Cardiac septum (tissue), 1 donor: ENCODE measurements at regions of chr6 and their contacts with region 1.

Region 1: DNA sequence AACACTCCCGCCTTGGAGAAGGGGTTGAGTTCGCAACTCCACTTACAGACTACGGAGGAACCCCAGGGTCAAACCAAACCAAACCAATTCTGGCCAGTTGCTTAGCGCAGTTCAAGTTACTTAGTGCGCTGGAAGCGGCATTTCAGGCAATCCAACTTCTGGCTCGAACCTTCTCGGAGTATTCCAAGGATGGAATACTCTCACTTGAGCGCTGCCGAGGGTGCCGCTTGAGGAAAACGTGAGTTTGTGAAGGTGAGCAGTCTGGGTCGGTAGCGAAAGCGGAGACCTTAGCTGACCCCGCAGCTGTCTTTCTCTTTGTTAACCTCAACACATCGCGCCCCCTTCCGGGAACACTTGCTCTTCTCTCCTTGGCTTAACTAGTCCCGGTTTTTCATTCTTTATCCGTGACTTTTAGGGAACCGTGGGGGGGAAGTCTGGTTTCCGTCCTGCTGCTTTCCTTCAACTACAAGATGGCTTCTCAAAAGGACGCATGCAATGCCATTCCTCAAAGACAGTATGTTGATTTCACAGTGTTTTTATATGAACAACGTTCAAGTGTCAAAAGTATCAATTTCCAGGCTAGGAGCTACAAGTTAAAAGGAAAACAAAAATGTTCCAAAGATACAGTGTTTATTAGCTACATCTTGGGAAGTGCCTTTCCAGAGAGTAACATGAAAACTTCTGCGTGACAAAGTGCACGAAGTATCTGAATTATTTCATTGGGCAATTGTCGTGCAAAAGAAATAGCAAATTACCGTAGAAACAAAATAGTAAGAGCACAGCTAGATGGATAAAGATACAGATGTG is 742 bp upstream of the PNISR start:
- DNase-seq: peak; percentile 84

Region 2: DNA sequence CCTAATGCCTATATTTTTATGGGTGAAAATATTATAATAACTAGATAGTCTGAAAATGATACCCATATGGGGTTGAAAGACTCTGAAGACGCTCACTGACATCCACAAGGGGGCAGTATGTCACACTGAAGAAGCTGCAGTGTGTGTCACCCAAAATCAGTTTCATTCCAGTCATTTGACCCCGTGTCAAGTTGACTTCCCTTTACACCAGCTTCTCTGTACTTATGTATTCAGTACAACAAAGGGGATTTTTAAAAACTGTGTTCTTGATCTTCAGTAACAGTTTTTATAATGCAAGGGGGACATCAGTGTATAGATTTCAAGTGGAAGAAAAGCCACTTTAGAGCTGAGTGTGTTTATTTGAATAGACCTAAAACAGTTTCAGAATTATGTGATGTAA is 95.7 kb before region 1 on chr6:
- intact Hi-C with region 1: loop called (anchors 10 kb)
- DNase-seq: no peak

Region 3: DNA sequence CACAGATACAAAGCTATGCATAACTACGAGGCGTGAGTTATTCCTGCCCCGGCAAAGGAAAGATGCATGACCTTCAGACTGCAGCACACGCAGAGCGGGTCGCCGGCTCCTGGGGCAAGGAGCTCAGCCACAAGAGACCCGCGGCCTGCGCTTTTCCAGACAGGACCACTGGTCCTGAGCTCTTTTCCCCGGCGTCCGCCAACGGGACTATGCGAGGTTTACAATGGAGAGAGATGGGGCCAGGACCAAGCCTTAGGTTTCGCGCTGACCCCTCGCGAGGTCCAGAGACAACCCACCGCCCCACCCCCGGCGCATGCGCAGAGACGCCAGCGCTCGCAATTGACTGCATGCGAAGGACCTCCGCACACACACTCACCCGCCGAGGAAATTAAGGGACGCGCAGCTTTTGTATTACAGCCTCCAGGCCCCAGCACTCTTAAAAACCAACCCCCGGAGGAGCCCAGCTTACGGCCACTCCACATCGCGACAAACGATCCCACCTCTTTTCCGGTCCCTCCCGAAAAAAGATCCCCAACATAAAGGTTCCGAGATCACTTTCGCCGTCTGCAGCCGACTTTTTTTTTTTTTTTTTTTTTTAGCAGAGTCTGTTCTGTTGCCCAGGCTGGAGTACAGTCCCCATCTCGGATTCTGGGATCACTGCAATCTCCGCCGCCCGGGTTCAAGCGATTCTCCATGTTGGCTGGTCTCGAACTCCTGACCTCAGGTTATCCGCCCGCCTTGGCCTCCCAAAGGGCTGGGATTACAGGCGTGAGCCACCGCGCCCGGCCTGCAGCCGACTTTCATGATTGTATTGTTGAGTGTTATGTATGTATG is 31.9 kb before region 1 on chr6 and contains the start of gene COQ3:
- intact Hi-C with region 1: loop called (anchors 2 kb)
- DNase-seq: peak; percentile 82
- total RNA-seq, gene COQ3: 20.7 TPM

Region 4: GRCh38 chr6:99520855-99521632 is 95.2 kb after region 1 on chr6:
- intact Hi-C with region 1: loop called (anchors 5 kb)
- DNase-seq: peak; percentile 94

Region 5: DNA sequence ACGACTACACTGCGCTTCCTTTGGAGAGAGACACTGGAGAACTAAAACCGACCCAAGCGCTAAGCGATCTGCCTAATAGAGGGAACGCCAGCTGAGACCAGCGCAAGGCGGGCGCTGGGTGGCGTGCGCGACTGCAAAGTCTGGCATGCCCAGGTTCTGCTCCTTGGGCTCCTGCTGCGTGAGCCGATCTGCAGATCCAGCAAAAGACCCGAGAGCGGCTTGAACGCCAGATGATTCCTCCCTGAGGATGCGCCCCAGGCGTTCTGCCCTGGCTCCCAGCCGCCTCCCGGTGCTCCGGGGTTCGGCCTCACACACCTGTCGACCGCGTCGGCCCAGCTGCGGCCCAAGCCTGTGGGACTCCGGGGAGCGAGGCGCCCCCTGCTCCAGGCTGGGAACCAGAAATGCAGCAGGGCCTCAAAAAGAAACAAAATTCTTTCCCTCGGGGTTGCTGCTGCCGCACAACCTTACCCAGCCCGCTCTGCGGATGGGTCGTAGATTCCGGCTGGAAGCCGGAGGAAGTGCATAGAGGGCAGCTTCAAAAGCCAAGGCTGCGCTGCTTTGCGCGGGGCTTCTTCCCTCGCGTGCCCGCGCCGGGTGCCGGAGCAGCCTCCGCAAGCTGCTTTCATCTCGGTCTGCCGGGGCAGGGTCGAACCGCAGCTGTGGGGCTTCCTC is 162.9 kb after region 1 on chr6:
- intact Hi-C with region 1: no loop called
- DNase-seq: no peak